ENCODE measurements at regions of chr13 and their contacts with region 1.

Region 1: DNA sequence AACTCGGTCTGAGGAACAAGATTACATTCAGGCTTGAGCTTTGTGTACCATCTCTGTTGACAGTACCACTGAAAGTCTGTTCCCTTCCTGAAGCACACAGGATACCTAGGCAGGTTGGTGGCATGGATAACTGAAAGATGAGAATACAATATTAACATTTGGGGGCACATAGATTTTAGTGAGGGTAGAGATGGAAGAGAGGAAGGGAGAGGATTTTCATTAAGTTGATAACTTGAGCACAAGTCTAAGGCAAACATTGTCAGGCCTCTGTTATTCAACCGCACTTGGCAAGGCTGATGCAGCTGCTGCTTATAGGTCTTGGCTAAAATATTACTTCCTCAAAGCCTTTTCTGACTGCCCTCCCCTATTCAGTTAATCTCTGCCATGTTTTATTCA is 10.9 kb downstream of the MIR17HG start:
- DNase-seq: no peak
- ATAC-seq: no peak
- H3K4me3 Mint-ChIP-seq: no peak overlapping the region
- H3K27ac Mint-ChIP-seq: no peak overlapping the region
- H3K4me1 Mint-ChIP-seq: peaks cover 5% of the 10 kb centered on the region
- H3K27me3 Mint-ChIP-seq: no peaks in the 10 kb centered on the region

Region 2: DNA sequence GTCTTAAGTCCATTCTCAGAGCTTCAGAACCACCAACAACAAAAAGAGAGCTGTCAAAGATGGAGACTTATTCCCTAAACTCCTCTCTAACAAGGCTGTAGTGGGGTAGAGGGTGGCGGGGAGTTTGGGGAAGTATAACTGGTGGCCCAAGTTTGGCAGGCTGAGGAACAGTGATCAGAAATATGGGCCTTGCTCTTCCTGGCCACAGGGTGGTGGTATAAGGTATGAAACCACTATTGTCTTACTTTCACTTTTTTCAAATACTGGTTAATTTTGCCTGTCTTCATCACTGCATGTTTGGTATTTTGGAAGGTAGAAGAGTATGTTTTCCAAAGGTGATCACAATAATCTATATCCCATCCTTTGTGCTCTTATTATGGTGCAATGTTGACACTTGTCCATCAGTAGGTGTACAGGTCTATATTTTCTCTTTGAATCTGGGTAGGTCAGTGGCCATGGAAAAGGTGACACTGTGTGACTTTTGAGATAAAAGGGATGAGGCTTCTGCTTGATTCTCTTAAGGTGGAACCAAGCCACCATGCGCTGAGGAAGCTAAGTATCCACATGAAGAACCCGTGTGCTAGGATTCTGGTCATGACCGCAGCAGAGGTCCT is 16.8 kb after region 1 on chr13:
- CTCF ChIA-PET with region 1: interaction called, 11 read pairs
- POLR2A ChIA-PET with region 1: no interaction called
- DNase-seq: peak; percentile 39
- ATAC-seq: peak; percentile 72
- H3K4me3 Mint-ChIP-seq: no peak overlapping the region
- H3K27ac Mint-ChIP-seq: no peak overlapping the region
- H3K4me1 Mint-ChIP-seq: peaks cover 10% of the 10 kb centered on the region
- H3K27me3 Mint-ChIP-seq: peaks cover 13% of the 10 kb centered on the region